CD4-positive, alpha-beta memory T cell (primary cell): ENCODE measurements at regions of chr9 and their contacts with region 1.

Region 1: DNA sequence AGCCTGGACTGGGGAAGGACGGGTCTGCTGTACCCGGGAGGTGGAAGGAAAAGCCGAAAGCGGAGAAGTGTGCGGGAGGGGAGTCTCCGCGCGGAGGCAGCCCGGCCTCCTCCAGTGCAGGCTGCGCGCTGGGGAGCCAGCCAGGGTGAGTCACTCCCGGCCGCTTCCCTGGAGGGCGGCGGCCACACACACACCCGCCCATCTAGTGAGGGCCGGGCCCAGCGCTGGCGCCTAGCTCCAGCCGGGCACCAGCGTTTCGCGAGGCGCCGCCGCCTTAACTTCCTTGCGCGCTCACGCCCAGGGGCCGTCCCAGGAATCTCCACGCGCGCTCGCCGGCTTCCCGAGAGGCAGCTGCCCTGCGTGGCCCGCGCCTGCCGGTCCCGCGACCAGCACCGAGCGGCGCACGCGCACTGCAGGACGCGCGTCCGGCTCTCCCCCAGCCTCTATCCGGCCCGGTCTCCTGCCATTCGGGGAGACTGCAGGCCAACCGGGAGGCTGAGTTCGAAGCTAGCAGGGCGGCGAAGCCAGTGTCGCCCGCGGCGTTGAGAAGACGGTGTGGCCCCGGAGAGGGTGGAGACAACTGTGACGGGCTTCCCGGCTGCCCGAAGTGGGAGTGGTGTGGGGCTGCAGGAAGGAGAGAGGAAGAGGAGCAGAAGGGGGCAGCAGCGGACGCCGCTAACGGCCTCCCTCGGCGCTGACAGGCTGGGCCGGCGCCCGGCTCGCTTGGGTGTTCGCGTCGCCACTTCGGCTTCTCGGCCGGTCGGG is at the start of gene JAK2:
- DNase-seq: peak; percentile 82 to 87 (median 83)
- H3K4me3 ChIP-seq: peak within 1 kb of the TSS; percentile 53
- H3K4me3 Mint-ChIP-seq: peak within 1 kb of the TSS; percentile 90 to 97 (median 96)
- H3K27ac ChIP-seq: peak within 1 kb of the TSS; percentile 73
- H3K27ac Mint-ChIP-seq: peak within 1 kb of the TSS; percentile 83 to 97 (median 94)
- H3K4me1 ChIP-seq: peaks cover 45% of the 10 kb centered on the region
- H3K4me1 Mint-ChIP-seq: peaks cover 15 to 30% (median 24%) of the 10 kb centered on the region in 4 donors
- H3K27me3 ChIP-seq: no peaks in the 10 kb centered on the region
- H3K27me3 Mint-ChIP-seq: no peaks in the 10 kb centered on the region
- total RNA-seq, gene JAK2: 17.0 to 19.9 TPM

Region 2: GRCh38 chr9:4382722-4383317 is 602.0 kb before region 1 on chr9:
- CTCF ChIA-PET with region 1: interaction called, 3 read pairs
- POLR2A ChIA-PET with region 1: no interaction called
- intact Hi-C with region 1: loop called (anchors 1 kb)
- DNase-seq: peak in 4 of 5 donors; percentile 9 to 29 (median 25)
- H3K4me3 ChIP-seq: no peak overlapping the region
- H3K4me3 Mint-ChIP-seq: no peak overlapping the region
- H3K27ac ChIP-seq: no peak overlapping the region
- H3K27ac Mint-ChIP-seq: no peak overlapping the region
- H3K4me1 ChIP-seq: no peaks in the 10 kb centered on the region
- H3K4me1 Mint-ChIP-seq: no peaks in the 10 kb centered on the region
- H3K27me3 ChIP-seq: no peaks in the 10 kb centered on the region
- H3K27me3 Mint-ChIP-seq: peaks cover 1 to 7% of the 10 kb centered on the region in 2 donors

Region 3: DNA sequence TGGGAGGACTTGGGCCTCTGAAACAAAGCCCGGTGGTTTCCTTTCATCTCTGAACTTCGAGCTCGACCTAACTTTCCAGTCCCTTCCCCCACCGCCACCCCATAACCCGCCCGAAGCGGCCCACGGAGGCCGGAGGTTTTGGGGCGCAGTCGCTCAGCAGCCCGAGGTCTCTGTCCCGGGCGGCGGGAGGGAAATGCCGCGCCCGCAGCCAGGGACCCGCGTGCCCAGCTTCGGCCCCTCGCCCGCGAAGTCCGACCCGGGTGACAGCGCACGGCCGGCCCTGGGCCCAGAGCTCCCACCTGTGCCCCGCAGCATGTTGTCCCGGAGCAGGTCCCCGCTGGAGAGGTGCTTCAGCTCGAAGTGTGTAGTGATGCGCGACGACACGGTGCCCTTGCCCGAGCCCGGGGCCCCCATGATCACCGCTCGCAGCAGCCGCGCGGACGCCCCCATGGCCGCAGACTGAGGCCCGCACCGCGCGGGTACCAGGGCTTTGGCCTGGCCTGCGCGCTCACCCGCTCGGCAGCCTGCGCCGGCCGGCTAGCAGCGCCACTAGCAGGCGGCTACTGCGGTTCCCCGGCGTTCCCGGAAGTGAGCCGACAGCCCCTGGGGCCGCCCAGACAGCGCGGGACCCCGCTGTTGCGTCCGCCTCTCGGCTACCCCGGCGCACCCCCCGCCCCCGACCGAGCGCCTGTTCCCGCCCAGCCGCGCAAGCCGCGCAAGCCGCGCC is 244.0 kb before region 1 on chr9 and contains the start of gene AK3:
- CTCF ChIA-PET with region 1: interaction called, 4 read pairs
- POLR2A ChIA-PET with region 1: interaction called, 9 read pairs
- intact Hi-C with region 1: loop called (anchors 5 kb)
- DNase-seq: peak; percentile 82 to 87 (median 84)
- H3K4me3 ChIP-seq: peak within 1 kb of the TSS; percentile 79 to 84
- H3K4me3 Mint-ChIP-seq: peak within 1 kb of the TSS; percentile 91 to 97 (median 94)
- H3K27ac ChIP-seq: peak within 1 kb of the TSS; percentile 78
- H3K27ac Mint-ChIP-seq: peak within 1 kb of the TSS; percentile 65 to 96 (median 94)
- H3K4me1 ChIP-seq: peaks cover 29% of the 10 kb centered on the region
- H3K4me1 Mint-ChIP-seq: peaks cover 20 to 44% (median 32%) of the 10 kb centered on the region in 4 donors
- H3K27me3 ChIP-seq: no peaks in the 10 kb centered on the region
- H3K27me3 Mint-ChIP-seq: no peaks in the 10 kb centered on the region
- total RNA-seq, gene AK3: 23.1 to 25.2 TPM

Region 4: DNA sequence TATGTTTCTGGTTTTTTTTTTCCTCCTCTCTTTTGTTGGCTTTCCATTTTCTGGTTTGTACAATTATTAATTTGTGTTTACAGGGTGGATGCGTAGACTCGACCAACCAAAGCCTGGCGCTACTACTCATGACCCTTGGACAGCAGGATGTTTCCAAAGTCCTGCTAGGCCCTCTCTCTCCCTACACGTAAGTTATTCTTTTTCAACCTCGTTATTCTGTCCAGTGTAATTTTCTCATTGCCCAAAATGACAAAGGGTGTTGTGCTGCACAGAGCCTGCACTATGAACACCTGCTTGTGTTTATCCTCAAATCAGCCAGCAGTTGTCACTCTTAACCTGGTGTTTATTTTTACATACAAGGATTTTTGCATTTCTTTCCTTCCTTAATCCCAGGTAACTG is 135.4 kb before region 1 on chr9:
- CTCF ChIA-PET with region 1: interaction called, 4 read pairs
- POLR2A ChIA-PET with region 1: no interaction called
- intact Hi-C with region 1: loop called (anchors 5 kb)
- DNase-seq: no peak
- H3K4me3 ChIP-seq: no peak overlapping the region
- H3K4me3 Mint-ChIP-seq: no peak overlapping the region
- H3K27ac ChIP-seq: no peak overlapping the region
- H3K27ac Mint-ChIP-seq: no peak overlapping the region
- H3K4me1 ChIP-seq: peaks cover 5% of the 10 kb centered on the region
- H3K4me1 Mint-ChIP-seq: peaks cover 2 to 5% (median 3%) of the 10 kb centered on the region in 4 donors
- H3K27me3 ChIP-seq: no peaks in the 10 kb centered on the region
- H3K27me3 Mint-ChIP-seq: no peaks in the 10 kb centered on the region

Region 5: DNA sequence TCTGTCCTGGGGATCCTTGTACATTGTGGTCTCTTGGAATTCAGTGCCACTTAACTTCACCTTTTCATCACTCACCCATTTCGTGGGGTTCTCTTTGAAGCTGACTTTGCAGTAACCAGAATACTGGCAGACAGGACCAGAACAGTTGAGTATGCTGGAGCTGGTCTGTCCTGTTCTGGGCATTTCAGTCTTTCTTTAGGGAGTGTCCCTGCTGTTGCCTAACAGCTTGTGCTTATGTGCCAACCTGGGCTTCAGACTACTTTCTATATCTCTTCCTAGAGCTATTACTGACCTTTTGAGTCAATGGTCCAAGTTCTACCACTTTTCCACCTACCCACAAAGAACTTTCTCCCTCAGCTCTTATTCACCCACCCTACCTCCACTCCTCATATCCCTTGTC is 210.7 kb after region 1 on chr9:
- CTCF ChIA-PET with region 1: no interaction called
- POLR2A ChIA-PET with region 1: no interaction called
- intact Hi-C with region 1: no loop called
- DNase-seq: no peak
- H3K4me3 ChIP-seq: no peak overlapping the region
- H3K4me3 Mint-ChIP-seq: no peak overlapping the region
- H3K27ac ChIP-seq: no peak overlapping the region
- H3K27ac Mint-ChIP-seq: no peak overlapping the region
- H3K4me1 ChIP-seq: no peaks in the 10 kb centered on the region
- H3K4me1 Mint-ChIP-seq: no peaks in the 10 kb centered on the region
- H3K27me3 ChIP-seq: no peaks in the 10 kb centered on the region
- H3K27me3 Mint-ChIP-seq: peaks cover 3% of the 10 kb centered on the region in 2 donors

Region 6: GRCh38 chr9:5425006-5425628 is 440.3 kb after region 1 on chr9:
- CTCF ChIA-PET with region 1: no interaction called
- POLR2A ChIA-PET with region 1: no interaction called
- intact Hi-C with region 1: no loop called
- DNase-seq: peak in 4 of 5 donors; percentile 48 to 53 (median 50)
- H3K4me3 ChIP-seq: no peak overlapping the region
- H3K4me3 Mint-ChIP-seq: no peak overlapping the region
- H3K27ac ChIP-seq: no peak overlapping the region
- H3K27ac Mint-ChIP-seq: peak overlapping the region in 1 of 7 donors; percentile 56
- H3K4me1 ChIP-seq: no peaks in the 10 kb centered on the region
- H3K4me1 Mint-ChIP-seq: peaks cover 3 to 12% (median 6%) of the 10 kb centered on the region in 4 donors
- H3K27me3 ChIP-seq: no peaks in the 10 kb centered on the region
- H3K27me3 Mint-ChIP-seq: no peaks in the 10 kb centered on the region

Region 7: GRCh38 chr9:5437254-5438216 is 452.7 kb after region 1 on chr9 and contains the start of gene PLGRKT:
- CTCF ChIA-PET with region 1: no interaction called
- POLR2A ChIA-PET with region 1: interaction called, 3 read pairs
- intact Hi-C with region 1: loop called (anchors 5 kb)
- DNase-seq: peak; percentile 89 to 95 (median 91)
- H3K4me3 ChIP-seq: peak within 1 kb of the TSS; percentile 71 to 83
- H3K4me3 Mint-ChIP-seq: peak within 1 kb of the TSS; percentile 91 to 98 (median 94)
- H3K27ac ChIP-seq: peak within 1 kb of the TSS; percentile 92
- H3K27ac Mint-ChIP-seq: peak within 1 kb of the TSS; percentile 99 to 100 (median 99)
- H3K4me1 ChIP-seq: peaks cover 23% of the 10 kb centered on the region
- H3K4me1 Mint-ChIP-seq: peaks cover 25 to 46% (median 36%) of the 10 kb centered on the region in 4 donors
- H3K27me3 ChIP-seq: no peaks in the 10 kb centered on the region
- H3K27me3 Mint-ChIP-seq: no peaks in the 10 kb centered on the region
- total RNA-seq, gene PLGRKT: 20.0 to 21.7 TPM

Region 8: GRCh38 chr9:6008169-6008979 is 1023.6 kb after region 1 on chr9:
- CTCF ChIA-PET with region 1: no interaction called
- POLR2A ChIA-PET with region 1: no interaction called
- intact Hi-C with region 1: loop called (anchors 10 kb)
- DNase-seq: peak; percentile 90 to 99 (median 95)
- H3K4me3 ChIP-seq: peak overlapping the region in 1 of 2 donors; percentile 82
- H3K4me3 Mint-ChIP-seq: peak overlapping the region; percentile 69 to 93 (median 82)
- H3K27ac ChIP-seq: peak overlapping the region; percentile 83
- H3K27ac Mint-ChIP-seq: peak overlapping the region; percentile 91 to 96 (median 94)
- H3K4me1 ChIP-seq: peaks cover 45% of the 10 kb centered on the region
- H3K4me1 Mint-ChIP-seq: peaks cover 28 to 76% (median 45%) of the 10 kb centered on the region in 4 donors
- H3K27me3 ChIP-seq: no peaks in the 10 kb centered on the region
- H3K27me3 Mint-ChIP-seq: no peaks in the 10 kb centered on the region